Calu3 (cell line): ENCODE measurements at regions of chr17 and their contacts with region 1.

Region 1: GRCh38 chr17:4966844-4967538 is 626 bp downstream of the SPAG7 start:
- DNase-seq: peak; percentile 95
- H3K4me3 Mint-ChIP-seq: no peak overlapping the region
- H3K27ac Mint-ChIP-seq: no peak overlapping the region
- H3K4me1 Mint-ChIP-seq: no peaks in the 10 kb centered on the region
- H3K27me3 Mint-ChIP-seq: no peaks in the 10 kb centered on the region
- CTCF ChIP-seq: no peak

Region 2: DNA sequence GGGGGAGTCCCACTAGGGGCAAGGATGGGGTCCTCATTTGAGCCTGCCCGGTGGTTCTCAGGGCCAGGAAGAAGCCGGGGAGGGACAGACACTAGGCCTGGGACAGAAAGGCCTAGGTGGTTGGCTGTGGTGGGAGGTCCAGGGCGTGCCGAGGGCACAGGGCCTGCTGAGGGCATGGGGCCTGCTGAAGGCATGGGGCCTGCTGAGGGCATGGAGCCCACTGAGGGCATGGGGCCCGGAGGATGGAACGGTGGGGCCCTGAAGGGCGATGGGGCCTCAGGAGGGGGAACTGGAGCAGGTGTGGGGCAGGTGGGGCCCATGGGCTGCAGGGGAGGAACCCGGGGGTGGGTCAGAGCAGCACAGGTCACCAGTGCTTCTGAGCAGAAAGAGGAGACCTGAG is 294.2 kb before region 1 on chr17:
- CTCF ChIA-PET with region 1: no interaction called
- intact Hi-C with region 1: no loop called
- DNase-seq: no peak
- H3K4me3 Mint-ChIP-seq: no peak overlapping the region
- H3K27ac Mint-ChIP-seq: no peak overlapping the region
- H3K4me1 Mint-ChIP-seq: no peaks in the 10 kb centered on the region
- H3K27me3 Mint-ChIP-seq: no peaks in the 10 kb centered on the region
- CTCF ChIP-seq: no peak

Region 3: GRCh38 chr17:4908301-4908700 is 58.7 kb before region 1 on chr17:
- CTCF ChIA-PET with region 1: interaction called, 11 read pairs
- intact Hi-C with region 1: no loop called
- DNase-seq: no peak
- H3K4me3 Mint-ChIP-seq: no peak overlapping the region
- H3K27ac Mint-ChIP-seq: no peak overlapping the region
- H3K4me1 Mint-ChIP-seq: peaks cover 5% of the 10 kb centered on the region
- H3K27me3 Mint-ChIP-seq: no peaks in the 10 kb centered on the region
- CTCF ChIP-seq: no peak

Region 4: GRCh38 chr17:4939796-4940624 is 27.0 kb before region 1 on chr17 and contains the starts of genes RNF167 and SLC25A11:
- CTCF ChIA-PET with region 1: interaction called, 10 read pairs
- intact Hi-C with region 1: no loop called
- DNase-seq: peak; percentile 91
- H3K4me3 Mint-ChIP-seq: peak within 1 kb of the TSS; percentile 91
- H3K27ac Mint-ChIP-seq: peak within 1 kb of the TSS; percentile 98
- H3K4me1 Mint-ChIP-seq: peaks cover 22% of the 10 kb centered on the region
- H3K27me3 Mint-ChIP-seq: no peaks in the 10 kb centered on the region
- CTCF ChIP-seq: no peak
- total RNA-seq, gene RNF167: 65.2 and 77.0 TPM in 2 replicates
- total RNA-seq, gene SLC25A11: 37.7 and 38.4 TPM in 2 replicates